ENCODE measurements at regions of chr7 and their contacts with region 1.

Region 1: GRCh38 chr7:14691597-14692203 is 210.9 kb downstream of the DGKB start:
- DNase-seq: peak; percentile 49

Region 2: DNA sequence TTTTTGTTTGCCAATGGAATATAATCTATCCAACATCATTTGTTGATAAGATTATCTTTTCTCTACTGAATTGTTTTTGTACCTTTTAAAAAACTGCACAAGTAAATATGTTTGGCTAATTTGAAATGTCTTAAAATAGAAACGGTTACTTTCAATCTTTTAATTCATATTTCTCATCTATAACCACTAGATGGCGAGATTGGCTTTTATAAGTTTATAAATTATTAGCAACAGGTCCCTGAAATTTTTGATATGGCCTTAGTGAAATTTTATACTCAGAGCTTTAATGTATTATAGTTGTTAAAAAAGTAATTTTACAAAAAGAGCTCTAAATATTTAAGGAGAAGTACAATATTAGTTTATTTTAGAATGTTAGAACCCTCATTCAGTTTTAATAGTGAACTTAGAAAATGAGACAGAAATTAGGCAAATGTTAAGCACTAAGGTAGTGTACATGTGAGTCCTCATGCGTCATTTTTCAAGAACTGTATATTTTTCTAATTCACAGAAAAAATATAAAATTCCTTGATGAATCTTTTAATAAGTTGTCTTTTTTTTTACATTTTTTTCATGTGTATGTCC is 1411.8 kb before region 1 on chr7:
- in situ Hi-C with region 1: loop called (anchors 25 kb)
- DNase-seq: peak; percentile 35

Region 3: GRCh38 chr7:13920053-13920697 is 771.5 kb before region 1 on chr7:
- in situ Hi-C with region 1: no loop called
- DNase-seq: no peak

Region 4: DNA sequence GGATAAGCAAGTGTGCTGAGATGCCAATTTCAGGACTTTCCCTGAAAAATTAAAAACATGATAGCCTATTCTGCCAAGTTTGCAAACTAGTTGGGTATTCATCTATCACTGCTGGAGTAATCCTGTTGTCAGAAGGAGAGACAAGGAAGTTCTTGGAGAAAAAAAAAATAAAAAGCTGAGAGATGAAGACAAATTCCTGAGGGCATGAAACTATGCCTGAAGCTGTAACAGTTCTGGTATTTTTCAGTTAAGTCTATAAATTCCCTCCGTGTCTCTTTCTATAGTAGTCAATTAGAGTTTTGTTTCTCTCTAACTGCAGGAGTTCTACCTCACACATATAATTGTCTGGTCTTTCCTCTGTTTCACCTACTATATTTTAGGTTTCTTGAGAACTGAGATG is 115.2 kb after region 1 on chr7:
- in situ Hi-C with region 1: no loop called
- DNase-seq: no peak